OCI-LY7 (cell line): ENCODE measurements at regions of chr5 and their contacts with region 1.

Region 1: DNA sequence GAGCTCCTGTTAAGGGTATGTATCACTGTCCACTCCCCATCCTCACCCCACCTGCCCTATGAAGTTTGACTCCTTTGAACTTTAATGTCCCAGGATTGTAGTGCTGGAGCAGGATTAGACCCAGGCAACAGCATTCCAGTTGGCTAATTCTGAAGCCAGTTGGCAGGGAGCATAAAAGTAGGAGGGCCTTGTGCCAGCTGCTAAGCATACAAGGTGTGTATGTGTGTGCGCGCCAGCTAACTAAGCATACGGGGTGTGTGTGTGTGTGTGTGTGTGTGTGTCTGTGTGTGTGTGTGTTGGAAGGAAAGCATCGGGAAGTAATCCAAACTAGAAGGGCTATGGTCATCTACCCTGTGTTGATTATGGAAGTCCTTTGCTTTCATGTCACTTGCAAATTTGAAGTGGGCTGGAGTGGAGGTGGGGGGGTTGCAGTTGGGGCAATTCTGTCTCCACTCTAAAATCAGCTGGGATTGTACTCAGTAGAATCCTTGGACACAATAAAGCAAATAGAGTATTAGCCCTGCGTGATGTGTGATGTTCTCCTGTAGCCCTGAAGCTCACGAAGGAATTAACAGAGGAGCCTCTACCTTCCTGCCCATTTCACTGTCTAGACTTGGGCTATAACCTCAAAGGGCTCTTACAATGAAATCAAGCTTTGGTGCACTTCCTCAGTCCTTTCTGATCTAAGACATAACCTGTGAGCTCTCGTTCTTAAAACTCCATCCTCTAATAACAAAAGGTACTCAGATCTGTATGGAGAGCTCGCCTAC is 26.9 kb downstream of the HMGCR start:
- DNase-seq: no peak
- H3K4me3 ChIP-seq: no peak overlapping the region
- H3K27ac ChIP-seq: no peak overlapping the region
- H3K4me1 ChIP-seq: no peaks in the 10 kb centered on the region
- CTCF ChIP-seq: no peak

Region 2: GRCh38 chr5:75639535-75640311 is 275.8 kb after region 1 on chr5:
- CTCF ChIA-PET with region 1: no interaction called
- POLR2A ChIA-PET with region 1: no interaction called
- intact Hi-C with region 1: no loop called
- DNase-seq: no peak
- H3K4me3 ChIP-seq: no peak overlapping the region
- H3K27ac ChIP-seq: no peak overlapping the region
- H3K4me1 ChIP-seq: no peaks in the 10 kb centered on the region
- CTCF ChIP-seq: no peak

Region 3: DNA sequence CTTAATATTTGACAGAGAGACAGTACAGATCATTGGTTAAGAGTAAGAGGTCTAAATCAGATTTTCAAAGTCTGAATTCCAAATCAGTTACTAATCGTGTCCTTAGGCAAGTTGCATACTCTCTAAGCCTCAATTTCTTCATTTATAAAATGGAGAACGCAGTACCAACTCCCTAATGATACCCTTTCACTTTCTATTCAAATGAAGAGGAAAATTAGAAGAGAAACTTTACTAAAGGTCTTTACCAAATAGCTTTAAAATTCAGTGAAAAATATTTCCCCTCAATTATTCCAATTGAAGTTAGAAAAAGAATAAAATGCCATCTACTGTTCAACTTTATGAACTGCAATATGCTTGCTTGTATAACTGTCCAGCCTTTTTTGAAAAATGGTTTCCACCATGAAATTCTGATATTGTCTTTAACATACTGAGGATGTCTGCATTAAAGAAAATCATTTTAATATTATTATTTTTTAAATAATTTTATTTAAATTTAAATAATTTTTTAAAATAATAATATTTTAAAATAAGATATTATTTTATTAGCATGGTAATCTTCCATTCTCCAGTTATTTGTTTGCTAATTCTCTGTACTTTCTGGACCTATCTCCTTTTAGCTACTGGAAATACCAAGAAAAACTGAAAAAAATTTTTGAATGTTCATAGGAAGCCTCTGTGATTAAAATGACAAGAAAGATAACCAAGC is 317.4 kb after region 1 on chr5:
- CTCF ChIA-PET with region 1: no interaction called
- POLR2A ChIA-PET with region 1: interaction called, 4 read pairs
- intact Hi-C with region 1: loop called (anchors 10 kb)
- DNase-seq: peak; percentile 61
- H3K4me3 ChIP-seq: no peak overlapping the region
- H3K27ac ChIP-seq: no peak overlapping the region
- H3K4me1 ChIP-seq: no peaks in the 10 kb centered on the region
- CTCF ChIP-seq: peak; percentile 80